Heart right ventricle (tissue), 16 donors: ENCODE measurements at regions of chr11 and their contacts with region 1.

Region 1: DNA sequence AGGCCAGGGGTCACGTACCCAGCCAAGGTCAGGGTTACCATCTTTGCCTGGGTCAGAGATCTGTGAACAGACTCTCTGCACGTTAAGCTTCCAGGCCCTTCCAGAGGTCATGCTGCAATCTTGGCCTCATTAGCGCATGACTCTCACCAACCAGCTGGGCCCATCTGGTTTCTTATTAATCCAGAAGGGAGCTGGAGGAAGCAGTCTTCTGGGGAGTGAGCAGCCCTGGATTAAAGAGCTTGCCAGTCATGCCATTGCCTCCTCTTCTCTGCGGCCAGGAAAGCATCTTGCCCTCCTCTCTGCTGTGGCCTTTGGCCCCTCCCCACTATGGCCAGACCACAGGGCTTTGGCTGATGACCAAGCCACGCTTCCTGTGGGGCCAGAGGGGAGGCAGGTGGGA is 57.4 kb downstream of the CHST1 start:
- DNase-seq: peak; percentile 16 to 52
- ATAC-seq: peak in 7 of 8 donors; percentile 31 to 75 (median 51)
- H3K4me3 ChIP-seq: no peak overlapping the region
- H3K27ac ChIP-seq: no peak overlapping the region
- H3K4me1 ChIP-seq: peaks cover 0 to 44% (median 26%) of the 10 kb centered on the region in 9 donors
- H3K27me3 ChIP-seq: peaks cover 0 to 20% (median 7%) of the 10 kb centered on the region in 7 donors
- CTCF ChIP-seq: no peak

Region 2: DNA sequence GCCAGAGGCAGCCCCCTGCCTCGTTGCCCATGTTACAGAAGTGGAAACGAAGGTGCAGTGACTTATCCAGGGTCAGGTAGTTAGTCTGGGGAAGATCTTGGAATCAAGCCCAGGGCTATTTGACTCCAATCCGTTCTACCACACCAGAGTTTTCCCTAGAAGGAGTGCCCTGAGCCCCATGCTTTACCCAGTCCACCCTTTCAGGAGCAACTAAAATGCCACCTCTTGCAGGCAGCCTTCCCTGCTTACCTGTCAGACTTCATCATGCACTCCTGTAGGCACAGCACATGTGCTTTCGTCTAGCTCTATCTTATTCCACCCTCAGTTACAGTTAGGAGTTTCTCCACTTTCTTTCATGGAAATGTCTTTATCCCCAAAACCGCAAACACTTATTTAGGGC is 22.8 kb before region 1 on chr11:
- intact Hi-C with region 1: loop called in 1 of 10 experiments (anchors 1 kb)
- DNase-seq: no peak
- ATAC-seq: no peak
- H3K4me3 ChIP-seq: no peak overlapping the region
- H3K27ac ChIP-seq: no peak overlapping the region
- H3K4me1 ChIP-seq: no peaks in the 10 kb centered on the region
- H3K27me3 ChIP-seq: peaks cover 0 to 46% (median 21%) of the 10 kb centered on the region in 7 donors
- CTCF ChIP-seq: no peak

Region 3: DNA sequence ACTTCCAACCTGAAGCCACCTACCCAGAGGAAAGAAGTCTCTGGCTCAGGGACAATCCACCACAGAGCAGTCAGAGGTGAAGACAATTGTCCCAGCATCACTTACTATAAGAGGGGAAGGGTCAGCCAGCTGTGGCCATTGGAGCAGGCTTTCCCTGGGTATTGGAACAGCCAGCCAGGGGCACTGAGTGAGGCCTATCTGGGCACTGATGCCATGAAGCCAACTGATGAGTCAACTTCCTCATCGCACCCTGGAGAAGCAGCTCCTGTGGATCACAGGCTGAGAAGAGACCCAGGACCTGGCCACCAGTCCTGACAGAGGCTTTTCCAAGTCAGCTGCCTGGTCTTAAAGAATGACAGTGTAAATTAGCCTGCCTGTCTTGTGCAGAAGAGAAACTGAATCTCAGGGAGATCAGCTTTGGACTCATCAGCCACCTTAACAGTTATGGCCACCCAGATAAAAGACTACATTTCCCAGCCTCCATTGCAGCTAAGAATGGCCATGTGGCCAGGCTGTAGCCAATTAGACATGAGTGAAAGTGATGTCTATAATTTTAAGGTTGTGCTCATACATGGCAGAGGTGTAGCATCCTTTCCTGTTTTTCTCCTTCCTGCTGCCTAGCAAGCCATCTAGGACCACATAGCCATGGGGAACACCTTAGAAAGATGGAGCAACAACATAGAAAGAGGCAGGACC is 38.4 kb after region 1 on chr11:
- intact Hi-C with region 1: loop called in 3 of 10 experiments (anchors 5 kb)
- DNase-seq: no peak
- ATAC-seq: peak in 6 of 8 donors; percentile 45 to 68 (median 52)
- H3K4me3 ChIP-seq: no peak overlapping the region
- H3K27ac ChIP-seq: no peak overlapping the region
- H3K4me1 ChIP-seq: peaks cover 0 to 42% (median 13%) of the 10 kb centered on the region in 9 donors
- H3K27me3 ChIP-seq: peaks cover 0 to 28% (median 10%) of the 10 kb centered on the region in 7 donors
- CTCF ChIP-seq: no peak